Naive thymus-derived CD4-positive, alpha-beta T cell (primary cell): ENCODE measurements at regions of chr12 and their contacts with region 1.

Region 1: DNA sequence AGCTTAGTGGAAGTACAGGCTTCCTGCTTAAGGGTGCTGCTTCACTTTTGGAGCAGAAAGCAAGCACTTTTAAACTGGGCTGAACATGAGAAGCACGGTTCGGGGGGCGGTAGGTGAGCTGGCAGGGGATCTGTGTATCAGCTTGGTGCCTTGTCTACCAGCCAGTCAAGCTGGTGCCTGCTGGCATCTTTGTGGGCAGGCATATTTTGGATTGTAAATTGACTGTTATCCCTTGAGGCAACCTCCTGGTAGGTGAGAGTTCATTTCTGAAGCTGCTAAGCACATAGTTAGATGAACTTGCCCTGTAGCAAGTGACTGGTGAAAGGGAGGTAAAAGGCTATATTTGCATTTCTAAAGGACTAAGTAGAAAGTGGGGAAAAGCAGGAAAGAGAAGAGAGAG is 121.1 kb upstream of the SYT10 start:
- DNase-seq: no peak
- ATAC-seq: no peak
- H3K4me3 ChIP-seq: no peak overlapping the region
- H3K4me3 Mint-ChIP-seq: no peak overlapping the region
- H3K27ac ChIP-seq: no peak overlapping the region
- H3K27ac Mint-ChIP-seq: no peak overlapping the region
- H3K4me1 ChIP-seq: no peaks in the 10 kb centered on the region
- H3K4me1 Mint-ChIP-seq: no peaks in the 10 kb centered on the region
- H3K27me3 ChIP-seq: no peaks in the 10 kb centered on the region
- H3K27me3 Mint-ChIP-seq: no peaks in the 10 kb centered on the region

Region 2: DNA sequence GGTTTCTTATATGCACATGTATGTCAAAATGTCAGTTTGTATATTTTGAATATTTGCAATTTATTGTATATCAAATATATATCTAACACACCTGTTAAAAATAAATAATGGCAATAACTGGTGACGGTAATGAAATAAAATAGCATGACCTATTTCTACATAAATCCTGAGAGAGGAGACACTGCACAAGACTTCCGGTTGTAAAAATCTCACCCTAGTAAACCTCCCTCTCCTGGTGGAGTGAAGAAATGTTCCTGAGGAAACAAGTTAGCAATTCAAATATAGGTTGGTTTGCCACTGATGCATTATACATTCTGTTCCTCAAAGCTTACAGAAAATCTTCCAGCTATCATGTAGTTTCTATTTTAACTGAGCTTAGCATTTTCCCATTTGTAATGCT is 45.0 kb after region 1 on chr12:
- CTCF ChIA-PET with region 1: no interaction called
- POLR2A ChIA-PET with region 1: no interaction called
- intact Hi-C with region 1: loop called in 1 of 2 experiments (anchors 5 kb)
- DNase-seq: peak in 1 of 9 donors; percentile 2
- ATAC-seq: no peak
- H3K4me3 ChIP-seq: no peak overlapping the region
- H3K4me3 Mint-ChIP-seq: no peak overlapping the region
- H3K27ac ChIP-seq: no peak overlapping the region
- H3K27ac Mint-ChIP-seq: no peak overlapping the region
- H3K4me1 ChIP-seq: no peaks in the 10 kb centered on the region
- H3K4me1 Mint-ChIP-seq: no peaks in the 10 kb centered on the region
- H3K27me3 ChIP-seq: no peaks in the 10 kb centered on the region
- H3K27me3 Mint-ChIP-seq: no peaks in the 10 kb centered on the region